ENCODE measurements at regions of chr17 and their contacts with region 1.

Region 1: GRCh38 chr17:7045909-7046724 is 2.2 kb upstream of the SLC16A11 start:
- DNase-seq: peak in 3 of 5 donors; percentile 34 to 60 (median 53)
- H3K4me3 ChIP-seq: peak overlapping the region; percentile 29
- H3K27ac ChIP-seq: no peak overlapping the region
- H3K4me1 ChIP-seq: peaks cover 17% of the 10 kb centered on the region
- H3K27me3 ChIP-seq: peaks cover 4% of the 10 kb centered on the region
- CTCF ChIP-seq: peak; percentile 50 to 84 (median 81)
- EP300 ChIP-seq: no peak
- POLR2A ChIP-seq: no peak

Region 2: DNA sequence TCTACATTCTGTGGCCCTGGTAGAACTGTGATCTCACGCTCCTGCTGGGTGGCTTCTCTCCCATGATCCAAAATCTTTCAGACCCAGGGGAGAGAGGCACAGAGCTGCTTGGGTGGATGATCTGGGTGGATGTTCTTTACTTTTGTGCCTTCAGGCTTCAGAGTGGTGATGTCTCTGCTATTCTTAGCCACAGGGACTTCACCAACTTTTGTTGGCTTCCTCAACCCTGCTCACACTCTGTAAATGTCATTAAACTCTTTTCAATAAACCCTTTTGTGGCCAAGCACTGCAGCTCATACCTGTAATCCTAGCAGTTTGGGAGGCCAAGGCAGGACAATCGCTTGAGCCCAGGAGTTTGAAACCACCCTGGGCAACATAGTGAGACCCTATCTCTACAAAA is 26.3 kb after region 1 on chr17:
- intact Hi-C with region 1: no loop called
- DNase-seq: no peak
- H3K4me3 ChIP-seq: no peak overlapping the region
- H3K27ac ChIP-seq: no peak overlapping the region
- H3K4me1 ChIP-seq: no peaks in the 10 kb centered on the region
- H3K27me3 ChIP-seq: no peaks in the 10 kb centered on the region
- CTCF ChIP-seq: no peak
- EP300 ChIP-seq: no peak
- POLR2A ChIP-seq: no peak

Region 3: GRCh38 chr17:7130621-7131422 is 84.7 kb after region 1 on chr17:
- intact Hi-C with region 1: loop called in 3 of 4 experiments (anchors 2 to 5 kb)
- DNase-seq: no peak
- H3K4me3 ChIP-seq: no peak overlapping the region
- H3K27ac ChIP-seq: no peak overlapping the region
- H3K4me1 ChIP-seq: no peaks in the 10 kb centered on the region
- H3K27me3 ChIP-seq: no peaks in the 10 kb centered on the region
- CTCF ChIP-seq: no peak
- EP300 ChIP-seq: no peak
- POLR2A ChIP-seq: no peak

Region 4: GRCh38 chr17:7136266-7136877 is 90.3 kb after region 1 on chr17:
- intact Hi-C with region 1: loop called in 3 of 4 experiments (anchors 2 to 5 kb)
- DNase-seq: peak; percentile 62 to 86 (median 73)
- H3K4me3 ChIP-seq: no peak overlapping the region
- H3K27ac ChIP-seq: no peak overlapping the region
- H3K4me1 ChIP-seq: no peaks in the 10 kb centered on the region
- H3K27me3 ChIP-seq: no peaks in the 10 kb centered on the region
- CTCF ChIP-seq: peak; percentile 38 to 76 (median 60)
- EP300 ChIP-seq: no peak
- POLR2A ChIP-seq: no peak

Region 5: GRCh38 chr17:7177196-7177953 is 131.3 kb after region 1 on chr17:
- intact Hi-C with region 1: loop called in 1 of 4 experiments (anchors 10 kb)
- DNase-seq: peak; percentile 53 to 76 (median 72)
- H3K4me3 ChIP-seq: peak overlapping the region; percentile 29
- H3K27ac ChIP-seq: no peak overlapping the region
- H3K4me1 ChIP-seq: no peaks in the 10 kb centered on the region
- H3K27me3 ChIP-seq: no peaks in the 10 kb centered on the region
- CTCF ChIP-seq: peak; percentile 49 to 63 (median 62)
- EP300 ChIP-seq: no peak
- POLR2A ChIP-seq: no peak

Region 6: DNA sequence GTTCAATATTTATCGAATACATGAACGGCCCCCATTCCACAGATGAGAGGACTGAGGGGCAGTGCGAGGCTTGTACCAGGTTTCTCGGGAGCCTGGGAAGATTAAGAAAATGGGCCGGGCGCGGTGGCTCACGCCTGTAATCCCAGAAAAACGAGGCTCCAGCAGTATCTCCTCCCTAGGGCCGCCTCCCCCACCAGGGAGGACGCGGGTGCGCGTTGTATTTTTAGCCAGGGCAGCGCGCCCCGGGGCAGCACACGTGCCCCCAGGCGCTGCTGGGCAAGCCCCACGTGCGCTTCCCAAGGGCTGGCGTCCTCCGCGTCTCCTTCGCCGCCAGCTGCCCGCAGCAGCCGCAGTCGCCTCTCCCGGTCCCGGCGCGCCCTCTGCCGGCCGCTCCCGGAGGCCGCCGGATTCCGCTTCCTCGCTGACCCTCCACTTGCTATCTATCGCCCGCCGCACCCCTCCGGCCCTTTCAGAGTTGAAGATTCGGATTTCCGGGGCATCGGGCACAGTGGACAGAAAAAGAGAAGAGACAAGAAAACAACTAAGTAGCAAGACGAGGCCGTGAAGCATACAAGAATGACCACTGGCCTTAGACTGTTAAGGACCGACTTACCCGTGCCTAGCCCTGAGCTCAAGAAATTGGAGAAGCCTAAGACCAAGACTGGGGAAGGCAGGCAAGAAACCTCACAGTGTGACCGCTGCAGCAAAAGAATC is 250.2 kb after region 1 on chr17:
- intact Hi-C with region 1: loop called in 3 of 4 experiments (anchors 2 to 5 kb)
- DNase-seq: peak; percentile 78 to 90 (median 83)
- H3K4me3 ChIP-seq: peak overlapping the region; percentile 6
- H3K27ac ChIP-seq: no peak overlapping the region
- H3K4me1 ChIP-seq: peaks cover 9% of the 10 kb centered on the region
- H3K27me3 ChIP-seq: peaks cover 3% of the 10 kb centered on the region
- CTCF ChIP-seq: peak; percentile 88 to 98 (median 94)
- EP300 ChIP-seq: no peak
- POLR2A ChIP-seq: no peak

Measured in ovary (tissue), 10 donors.